Lower leg skin (tissue), 4 donors: ENCODE measurements at regions of chr19 and their contacts with region 1.

Region 1: DNA sequence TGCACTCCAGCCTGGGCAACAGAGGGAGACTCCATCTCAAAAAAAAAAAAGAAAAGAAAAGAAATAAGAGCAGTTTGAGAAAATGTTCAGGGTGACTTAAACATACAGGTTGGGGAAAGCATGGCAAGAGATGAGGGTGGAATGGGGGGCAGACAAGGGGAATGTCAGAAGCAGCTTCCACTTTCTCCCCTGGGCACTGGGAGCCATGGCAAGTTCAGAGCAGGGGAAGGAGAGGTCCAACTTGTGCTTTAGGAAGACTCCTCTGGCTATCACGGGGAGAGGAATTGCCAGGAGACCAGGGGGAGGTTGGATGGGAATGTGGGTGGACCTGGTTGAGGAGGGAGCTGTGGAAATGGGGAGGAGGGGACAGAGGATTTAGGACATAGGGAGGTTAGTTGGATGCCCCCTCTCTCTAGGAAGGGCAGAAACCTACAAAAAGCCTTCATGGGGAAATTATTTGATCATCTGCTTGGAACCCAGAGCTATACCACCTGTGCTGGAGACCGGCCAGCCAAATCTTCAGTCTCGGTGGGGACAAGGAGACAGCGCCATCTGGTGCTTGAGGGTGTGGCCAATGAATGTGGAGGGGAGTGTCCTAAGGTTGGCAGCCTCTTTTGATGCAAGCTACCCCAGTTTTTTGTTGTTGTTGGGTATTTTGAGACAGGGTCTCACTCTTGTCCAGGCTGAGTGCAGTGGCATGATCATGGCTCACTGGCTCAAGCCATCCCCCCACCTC is 7.3 kb upstream of the STRN4 start:
- DNase-seq: no peak
- H3K4me3 ChIP-seq: no peak overlapping the region
- CTCF ChIP-seq: no peak
- POLR2A ChIP-seq: no peak

Region 2: DNA sequence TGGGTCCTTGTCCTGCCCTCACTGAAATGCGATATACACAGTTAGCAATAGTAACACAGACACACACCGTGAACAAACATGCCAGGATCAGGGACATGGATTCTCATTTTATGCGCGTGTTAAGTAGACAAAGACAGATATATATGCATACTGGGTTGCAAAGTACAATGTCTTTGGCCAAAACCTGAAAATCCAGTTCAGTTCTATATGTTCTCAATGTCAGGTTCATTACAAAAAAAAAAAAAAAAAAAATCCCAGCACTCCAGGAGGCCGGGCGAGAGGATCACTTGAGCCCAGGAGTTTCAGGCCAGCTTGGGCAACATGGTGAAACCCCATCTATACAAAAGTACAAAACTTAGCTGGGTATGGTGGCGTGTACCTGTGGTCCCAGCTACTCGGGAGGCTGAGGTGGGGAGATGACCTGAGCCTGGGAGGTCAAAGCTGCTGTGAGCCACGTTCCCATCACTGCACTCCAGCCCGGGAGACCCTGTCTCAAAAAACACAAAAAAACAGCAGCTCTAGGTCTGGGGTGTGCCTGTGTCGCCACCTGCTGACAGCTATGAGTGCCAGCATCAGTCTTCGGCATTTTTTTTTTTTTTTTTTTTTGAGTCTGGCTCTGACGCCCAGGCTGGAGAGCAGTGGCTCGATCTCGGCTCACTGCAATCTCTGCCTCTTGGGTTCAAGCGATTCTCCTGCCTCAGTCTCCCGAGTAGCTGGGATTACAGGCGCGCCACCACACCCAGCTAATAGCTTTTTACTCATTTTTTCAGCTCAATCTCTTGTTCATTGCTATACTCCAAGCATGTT is 86.8 kb after region 1 on chr19:
- intact Hi-C with region 1: loop called (anchors 2 kb)
- DNase-seq: no peak
- H3K4me3 ChIP-seq: no peak overlapping the region
- CTCF ChIP-seq: peak in 1 of 3 donors; percentile 56
- POLR2A ChIP-seq: no peak

Region 3: GRCh38 chr19:47005873-47006272 is 252.3 kb after region 1 on chr19:
- intact Hi-C with region 1: loop called (anchors 10 kb)
- DNase-seq: no peak
- H3K4me3 ChIP-seq: no peak overlapping the region
- CTCF ChIP-seq: no peak
- POLR2A ChIP-seq: no peak